Cardiac septum (tissue), 1 donor: ENCODE measurements at regions of chr11 and their contacts with region 1.

Region 1: GRCh38 chr11:17207317-17208258 is at the start of gene PIK3C2A:
- DNase-seq: peak; percentile 99
- total RNA-seq, gene PIK3C2A: 34.1 TPM

Region 2: GRCh38 chr11:15843309-15843872 is 1364.2 kb before region 1 on chr11:
- intact Hi-C with region 1: loop called (anchors 10 kb)
- DNase-seq: no peak

Region 3: DNA sequence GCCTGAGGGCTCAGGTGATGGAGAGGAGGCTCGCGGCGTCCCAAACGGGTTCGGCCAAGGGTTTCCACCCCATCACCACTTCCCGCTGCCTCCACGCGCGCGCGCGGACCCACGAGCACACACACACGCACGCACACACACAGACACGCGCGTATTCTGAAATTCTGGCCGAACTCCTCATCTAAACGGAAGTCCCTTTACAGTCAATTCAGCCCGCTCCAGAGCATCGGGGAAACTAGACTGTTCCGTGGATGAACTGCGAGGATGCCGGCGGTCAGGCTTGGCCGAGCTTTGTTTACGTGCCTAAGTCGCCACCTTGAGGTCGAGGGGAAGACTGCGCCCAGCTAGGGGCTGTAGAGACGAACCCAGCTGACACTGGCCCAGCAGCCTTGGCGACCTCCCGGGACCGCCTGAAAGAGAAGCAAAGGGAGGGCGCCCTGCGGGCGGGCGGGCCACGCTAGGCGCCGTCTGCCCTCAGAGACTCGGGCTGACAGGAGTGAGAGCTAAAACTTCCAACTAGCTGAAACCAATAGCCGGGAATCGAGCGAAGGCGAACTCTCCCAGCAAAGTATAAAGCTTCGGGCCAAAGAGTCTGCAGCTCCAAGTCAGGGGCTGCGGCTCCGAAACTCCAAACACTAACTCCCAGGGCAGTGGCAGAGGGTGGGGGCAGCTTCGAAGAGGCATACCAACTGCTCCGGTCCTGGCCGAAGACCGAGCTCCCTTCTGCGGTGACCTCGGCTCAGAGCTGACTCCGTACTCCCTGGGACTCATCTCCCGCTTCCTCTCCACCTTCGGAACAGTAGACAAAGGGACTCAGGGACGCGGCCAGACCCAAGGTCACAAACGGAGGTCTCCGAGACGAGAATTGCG is 593.8 kb before region 1 on chr11:
- intact Hi-C with region 1: no loop called
- DNase-seq: peak; percentile 93

Region 4: GRCh38 chr11:17077520-17078401 is 129.8 kb before region 1 on chr11 and contains the start of gene RPS13:
- intact Hi-C with region 1: loop called (anchors 5 kb)
- DNase-seq: peak; percentile 99
- total RNA-seq, gene RPS13: 522 TPM

Region 5: GRCh38 chr11:17157761-17158160 is 49.8 kb before region 1 on chr11:
- intact Hi-C with region 1: loop called (anchors 2 kb)
- DNase-seq: no peak

Region 6: DNA sequence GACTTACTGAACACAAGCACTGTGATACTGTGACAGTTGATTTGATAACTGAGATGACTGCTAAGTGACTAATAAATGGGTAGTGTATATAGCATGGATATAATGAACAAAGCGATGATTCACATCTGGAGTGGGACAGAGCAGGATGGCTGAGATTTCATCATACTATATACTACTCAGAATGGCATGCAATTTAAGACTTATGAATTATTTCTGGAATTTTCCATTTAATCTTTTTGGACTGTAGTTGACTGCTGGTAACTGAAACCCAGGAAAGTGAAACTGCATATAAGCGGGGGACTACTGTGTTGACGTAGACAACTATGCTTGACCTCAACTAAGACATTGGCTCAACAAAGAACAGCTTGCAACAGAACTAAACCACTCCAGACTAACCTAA is 48.9 kb after region 1 on chr11:
- intact Hi-C with region 1: no loop called
- DNase-seq: no peak

Region 7: DNA sequence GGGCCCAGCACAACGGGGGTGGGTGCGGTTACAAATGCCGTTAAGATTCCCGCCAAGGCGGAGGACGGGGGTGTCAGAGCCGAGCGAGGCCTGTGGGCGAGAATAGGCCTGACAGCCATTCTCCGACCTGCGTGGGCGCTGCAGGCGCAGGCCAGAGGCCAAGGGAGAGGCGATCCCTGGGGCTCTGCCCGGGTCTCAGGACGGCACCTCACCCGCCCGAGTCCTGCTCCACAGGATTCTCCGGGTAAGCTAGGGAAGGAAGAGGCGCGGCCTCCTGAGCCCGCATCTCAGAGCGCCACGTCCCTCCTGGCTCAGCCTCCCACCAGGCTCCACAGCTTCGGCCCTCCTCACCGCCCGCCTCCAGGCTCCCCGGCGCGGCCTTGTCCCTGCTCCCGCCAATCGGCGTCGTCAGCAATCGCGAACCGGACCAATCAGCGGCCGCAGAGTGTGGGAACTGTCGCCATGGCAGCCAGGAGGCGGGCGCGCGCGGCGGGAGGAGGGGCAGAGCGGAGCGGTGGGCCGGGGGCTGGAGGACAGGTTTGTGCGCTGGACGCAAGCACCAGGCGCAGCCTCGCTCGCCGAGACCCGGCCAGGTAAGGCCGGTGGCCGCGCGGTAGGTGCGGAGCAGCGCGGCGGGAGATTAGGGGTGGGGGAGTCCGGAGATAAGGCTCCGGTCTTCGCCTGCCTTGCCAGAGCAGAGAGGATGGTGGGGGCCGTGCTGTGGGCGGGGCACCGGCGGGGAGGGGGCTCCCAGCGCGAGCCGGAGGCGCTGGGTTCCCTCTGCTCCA is 68.8 kb after region 1 on chr11 and contains the start of gene NUCB2:
- intact Hi-C with region 1: no loop called
- DNase-seq: peak; percentile 99
- total RNA-seq, gene NUCB2: 91.6 TPM